ENCODE measurements at regions of chr5 and their contacts with region 1.

Region 1: GRCh38 chr5:130424341-130424740 is 520.1 kb downstream of the CHSY3 start:
- DNase-seq: no peak
- H3K4me3 ChIP-seq: no peak overlapping the region
- H3K27ac ChIP-seq: no peak overlapping the region
- H3K4me1 ChIP-seq: peaks cover 8% of the 10 kb centered on the region
- H3K27me3 ChIP-seq: no peaks in the 10 kb centered on the region
- CTCF ChIP-seq: no peak
- POLR2A ChIP-seq: no peak

Region 2: DNA sequence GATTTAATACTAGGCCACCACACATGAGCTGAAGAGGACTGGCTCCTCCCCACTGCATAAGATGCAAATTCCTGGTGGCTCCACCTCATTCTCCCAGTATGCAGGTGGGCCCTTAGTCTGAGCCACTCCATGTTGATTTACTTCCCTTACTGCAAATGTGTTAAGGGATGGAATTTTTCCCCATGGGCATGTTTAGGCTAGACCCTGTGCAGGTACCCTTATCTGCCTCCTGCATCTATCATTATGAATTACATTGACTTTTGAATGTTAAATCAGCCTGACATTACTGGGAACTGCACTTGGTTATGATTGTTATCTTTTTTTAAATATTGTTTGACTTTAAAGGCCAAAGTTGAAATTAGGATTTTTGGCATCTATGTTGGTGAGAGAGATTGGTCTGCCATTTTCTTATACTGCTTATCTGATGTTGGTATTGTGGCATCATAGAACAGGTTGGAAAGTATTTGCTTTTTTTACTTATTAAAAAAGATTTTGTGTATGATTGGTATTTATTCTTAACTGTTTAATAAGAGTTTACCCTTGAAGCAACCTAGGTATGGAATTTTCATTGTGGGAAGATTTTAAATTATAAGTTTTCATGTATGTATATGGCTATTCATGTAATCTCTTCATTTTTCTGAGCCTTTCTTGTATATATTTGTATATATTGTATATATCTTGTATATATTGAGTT is 1246.7 kb before region 1 on chr5:
- intact Hi-C with region 1: loop called (anchors 5 kb)
- DNase-seq: no peak
- H3K4me3 ChIP-seq: no peak overlapping the region
- H3K27ac ChIP-seq: no peak overlapping the region
- H3K4me1 ChIP-seq: no peaks in the 10 kb centered on the region
- H3K27me3 ChIP-seq: no peaks in the 10 kb centered on the region
- CTCF ChIP-seq: no peak
- POLR2A ChIP-seq: no peak